GM13976 (cell line): ENCODE measurements at regions of chr3 and their contacts with region 1.

Region 1: DNA sequence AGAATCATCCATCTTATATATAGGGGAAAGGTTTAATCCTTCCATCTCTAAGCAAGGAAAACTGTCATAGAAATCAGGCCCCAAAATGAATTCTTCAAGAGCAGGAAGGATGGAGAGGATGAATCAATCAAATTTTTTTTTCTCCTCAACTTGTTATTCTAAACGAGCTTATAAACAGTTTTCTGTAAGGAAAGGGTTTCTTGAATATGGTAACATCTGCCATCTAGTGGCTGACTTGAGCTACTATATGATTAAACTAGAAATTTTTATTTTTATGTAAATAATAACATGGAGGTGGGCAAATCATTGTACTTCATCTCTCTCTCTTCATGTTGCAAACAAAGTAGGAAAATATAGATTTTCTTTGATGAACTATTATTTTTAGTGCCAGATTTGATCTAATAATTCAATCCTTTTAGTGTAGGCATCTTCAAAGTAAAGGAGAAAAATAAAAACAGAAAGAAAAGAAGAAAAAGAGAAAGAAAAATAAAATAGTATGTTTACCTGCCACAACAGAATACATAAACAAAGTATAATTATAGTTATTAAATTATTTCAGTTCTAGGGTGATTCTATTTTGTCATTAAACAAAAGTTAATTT is 146.6 kb downstream of the SERPINI1 start:
- DNase-seq: peak; percentile 18
- CTCF ChIP-seq: peak; percentile 38

Region 2: DNA sequence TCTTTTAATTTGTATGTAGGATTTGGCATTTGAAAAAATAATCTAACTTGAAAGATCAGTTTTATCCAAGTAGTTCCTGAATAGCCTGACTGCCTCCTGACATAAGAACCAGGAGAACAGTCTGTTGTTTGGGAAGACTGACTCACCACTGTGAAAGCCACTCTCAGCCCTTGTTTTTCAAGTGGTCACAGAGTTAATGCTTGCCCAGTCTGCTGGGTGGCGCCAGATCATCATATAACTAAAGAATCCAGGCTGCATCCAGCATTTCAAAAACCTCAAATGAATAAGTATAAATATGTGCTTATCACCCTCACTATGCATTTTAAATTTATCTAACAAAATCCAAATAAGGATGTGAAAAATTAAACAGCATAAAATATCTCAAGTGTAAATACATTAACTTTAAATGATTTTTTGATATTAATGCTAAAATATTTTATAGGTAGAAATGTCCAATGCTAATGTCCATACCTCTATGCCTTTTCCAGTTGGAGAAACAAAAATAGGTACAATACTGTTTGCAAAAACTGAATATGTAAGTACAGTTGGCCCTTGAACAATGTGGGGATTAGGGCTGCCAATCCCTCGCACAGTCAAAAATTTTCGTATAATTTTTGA is 475.2 kb before region 1 on chr3:
- in situ Hi-C with region 1: loop called (anchors 25 kb)
- DNase-seq: no peak
- CTCF ChIP-seq: peak; percentile 13

Region 3: GRCh38 chr3:167750272-167750971 is 131.7 kb before region 1 on chr3:
- in situ Hi-C with region 1: no loop called
- DNase-seq: peak; percentile 58
- CTCF ChIP-seq: no peak

Region 4: GRCh38 chr3:168034152-168034928 is 152.2 kb after region 1 on chr3:
- in situ Hi-C with region 1: no loop called
- DNase-seq: no peak
- CTCF ChIP-seq: no peak